ENCODE measurements at regions of chr14 and their contacts with region 1.

Region 1: GRCh38 chr14:65976761-65977404 is 509.3 kb upstream of the CCDC196 start:
- DNase-seq: no peak
- ATAC-seq: no peak
- H3K4me3 ChIP-seq: no peak overlapping the region
- H3K27ac ChIP-seq: no peak overlapping the region
- H3K4me1 ChIP-seq: peaks cover 0 to 4% (median 0%) of the 10 kb centered on the region in 12 donors
- H3K27me3 ChIP-seq: peaks cover 0 to 6% (median 0%) of the 10 kb centered on the region in 9 donors
- CTCF ChIP-seq: no peak
- POLR2A ChIP-seq: no peak

Region 2: DNA sequence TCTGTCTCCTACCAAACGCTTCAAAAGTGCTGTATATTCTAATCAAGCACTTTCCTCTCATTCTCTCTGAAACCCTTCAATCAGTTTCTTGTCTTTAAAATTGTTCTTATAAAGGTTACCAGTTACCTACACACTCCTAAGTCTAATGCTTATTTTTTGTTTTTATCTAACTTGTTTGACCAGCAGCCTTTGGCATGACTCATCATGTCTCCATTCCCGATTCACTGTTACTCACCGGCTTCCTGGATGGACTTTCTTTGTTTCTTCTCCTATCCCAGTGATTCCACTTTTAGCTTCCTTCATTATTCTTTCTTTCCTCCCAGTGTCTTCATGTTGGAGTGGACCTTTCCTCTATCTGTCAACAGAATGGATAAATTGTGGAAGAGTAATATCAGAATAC is 140.7 kb after region 1 on chr14:
- intact Hi-C with region 1: loop called in 1 of 10 experiments (anchors 5 kb)
- DNase-seq: no peak
- ATAC-seq: no peak
- H3K4me3 ChIP-seq: no peak overlapping the region
- H3K27ac ChIP-seq: no peak overlapping the region
- H3K4me1 ChIP-seq: no peaks in the 10 kb centered on the region
- H3K27me3 ChIP-seq: no peaks in the 10 kb centered on the region
- CTCF ChIP-seq: no peak
- POLR2A ChIP-seq: no peak